CD8-positive, alpha-beta memory T cell (primary cell): ENCODE measurements at regions of chr1 and their contacts with region 1.

Region 1: DNA sequence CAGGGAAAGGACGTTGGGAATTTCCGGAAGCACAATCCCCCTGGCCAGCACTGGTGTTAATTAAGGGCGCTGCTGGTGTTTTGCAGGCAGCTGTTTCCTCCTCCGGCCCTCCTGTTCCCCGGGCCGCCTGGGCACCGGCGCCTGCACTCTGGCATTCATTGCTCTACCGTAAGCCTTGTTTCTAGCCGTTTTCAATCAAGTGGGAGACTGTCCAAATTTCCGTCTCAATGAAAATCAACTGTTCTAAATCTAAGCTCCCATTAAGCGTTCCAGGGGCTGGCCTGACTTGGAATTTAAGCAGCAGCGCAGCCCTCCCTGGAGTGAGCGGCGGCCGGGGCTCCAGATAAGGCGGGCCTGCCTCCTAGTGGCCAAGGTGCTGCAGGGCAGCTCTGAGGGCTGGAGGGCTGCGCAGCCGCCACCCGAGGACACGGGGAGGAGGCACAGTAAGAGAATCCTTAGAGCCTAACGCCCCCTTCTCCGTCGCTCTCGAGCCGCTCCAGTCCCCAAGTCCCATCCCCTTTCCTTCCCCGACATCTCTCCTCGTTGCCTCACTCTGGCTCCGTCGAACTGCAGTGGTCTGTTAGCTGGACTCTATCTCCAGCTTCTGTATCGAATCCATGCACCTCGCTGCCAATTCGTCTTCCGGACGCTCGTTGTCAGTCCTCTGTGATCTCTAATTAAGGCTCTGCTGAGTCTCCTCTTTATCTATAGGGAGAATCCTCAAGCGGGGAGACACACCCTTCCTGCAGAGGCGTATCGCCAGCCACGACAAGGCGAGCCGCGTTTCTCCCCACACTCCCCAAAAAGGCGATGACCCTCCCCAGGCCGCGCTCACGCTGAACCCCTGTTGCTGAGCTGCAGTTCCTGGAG is 57.8 kb upstream of the LRRC8D start:
- DNase-seq: peak; percentile 75 to 90 (median 82)
- H3K4me3 ChIP-seq: peak overlapping the region; percentile 80
- H3K4me3 Mint-ChIP-seq: peak overlapping the region; percentile 85 to 97 (median 88)
- H3K27ac ChIP-seq: peak overlapping the region; percentile 48
- H3K27ac Mint-ChIP-seq: peak overlapping the region; percentile 62 to 96 (median 92)
- H3K4me1 ChIP-seq: peaks cover 43% of the 10 kb centered on the region
- H3K4me1 Mint-ChIP-seq: peaks cover 46 to 55% (median 53%) of the 10 kb centered on the region in 3 donors
- H3K27me3 ChIP-seq: no peaks in the 10 kb centered on the region
- H3K27me3 Mint-ChIP-seq: no peaks in the 10 kb centered on the region

Region 2: DNA sequence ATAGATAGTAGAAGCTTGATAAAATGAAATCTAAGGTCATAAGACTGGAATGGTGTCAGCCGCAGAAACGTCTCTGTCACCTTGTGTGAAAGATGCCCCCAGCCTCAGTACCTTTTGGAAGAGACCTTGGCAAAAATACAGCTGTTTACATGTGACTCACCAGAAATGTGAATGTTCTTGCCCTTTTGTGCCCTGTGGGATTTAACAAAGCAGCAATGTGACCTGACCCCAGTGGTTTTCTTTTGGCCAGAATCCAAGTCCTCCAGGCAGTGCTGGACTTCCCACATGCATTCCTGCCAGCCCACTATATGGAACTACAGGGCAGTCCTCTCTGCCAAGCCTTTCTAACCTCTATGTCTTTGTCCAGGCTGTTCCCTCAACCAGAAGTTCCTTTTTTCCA is 157.3 kb before region 1 on chr1:
- CTCF ChIA-PET with region 1: interaction called, 56 read pairs
- POLR2A ChIA-PET with region 1: interaction called, 12 read pairs
- DNase-seq: no peak
- H3K4me3 ChIP-seq: no peak overlapping the region
- H3K4me3 Mint-ChIP-seq: peak overlapping the region in 5 of 7 donors; percentile 10 to 90 (median 32)
- H3K27ac ChIP-seq: no peak overlapping the region
- H3K27ac Mint-ChIP-seq: peak overlapping the region; percentile 77 to 99 (median 97)
- H3K4me1 ChIP-seq: peaks cover 90% of the 10 kb centered on the region
- H3K4me1 Mint-ChIP-seq: peaks cover 82 to 98% (median 94%) of the 10 kb centered on the region in 3 donors
- H3K27me3 ChIP-seq: no peaks in the 10 kb centered on the region
- H3K27me3 Mint-ChIP-seq: peaks cover 0 to 3% of the 10 kb centered on the region in 2 donors

Region 3: DNA sequence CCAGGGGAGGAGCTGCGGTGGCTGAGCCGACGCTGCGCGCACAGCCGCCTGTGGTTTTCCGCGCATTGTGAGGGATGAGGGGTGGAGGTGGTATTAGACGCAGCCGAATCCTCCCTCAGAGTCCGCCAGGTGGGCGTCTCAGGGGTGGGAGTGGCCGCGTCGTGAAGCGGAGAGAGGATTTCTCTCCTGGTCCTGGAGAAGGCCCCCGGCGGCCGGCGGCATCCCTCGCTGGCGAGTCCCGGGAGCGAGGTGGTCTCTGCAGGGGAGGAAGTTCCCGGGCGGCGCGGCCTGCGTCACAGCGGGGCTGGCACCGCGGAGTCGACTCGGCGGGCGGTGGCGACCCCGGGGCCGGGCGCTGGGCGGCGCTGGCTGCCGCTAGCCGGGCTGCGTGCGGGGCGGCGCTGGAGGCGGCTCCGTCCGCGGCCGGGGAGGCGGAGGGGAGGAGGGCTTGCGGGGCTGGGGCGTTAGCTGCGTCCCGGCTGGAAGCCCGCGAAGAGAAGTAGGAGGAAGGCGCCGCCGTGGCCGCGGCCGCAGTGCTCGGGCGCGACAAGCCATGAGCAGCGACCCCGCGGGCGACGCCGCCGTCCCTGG is 130.3 kb before region 1 on chr1 and contains the start of gene LRRC8C:
- CTCF ChIA-PET with region 1: interaction called, 134 read pairs
- POLR2A ChIA-PET with region 1: interaction called, 32 read pairs
- DNase-seq: peak; percentile 78 to 95 (median 90)
- H3K4me3 ChIP-seq: peak within 1 kb of the TSS; percentile 74
- H3K4me3 Mint-ChIP-seq: peak within 1 kb of the TSS; percentile 90 to 99 (median 96)
- H3K27ac ChIP-seq: peak within 1 kb of the TSS; percentile 86
- H3K27ac Mint-ChIP-seq: peak within 1 kb of the TSS; percentile 95 to 99 (median 98)
- H3K4me1 ChIP-seq: peaks cover 77% of the 10 kb centered on the region
- H3K4me1 Mint-ChIP-seq: peaks cover 72 to 85% (median 83%) of the 10 kb centered on the region in 3 donors
- H3K27me3 ChIP-seq: no peaks in the 10 kb centered on the region
- H3K27me3 Mint-ChIP-seq: peaks cover 0 to 3% of the 10 kb centered on the region in 2 donors
- total RNA-seq, gene LRRC8C: 61.4 to 63.5 TPM

Region 4: DNA sequence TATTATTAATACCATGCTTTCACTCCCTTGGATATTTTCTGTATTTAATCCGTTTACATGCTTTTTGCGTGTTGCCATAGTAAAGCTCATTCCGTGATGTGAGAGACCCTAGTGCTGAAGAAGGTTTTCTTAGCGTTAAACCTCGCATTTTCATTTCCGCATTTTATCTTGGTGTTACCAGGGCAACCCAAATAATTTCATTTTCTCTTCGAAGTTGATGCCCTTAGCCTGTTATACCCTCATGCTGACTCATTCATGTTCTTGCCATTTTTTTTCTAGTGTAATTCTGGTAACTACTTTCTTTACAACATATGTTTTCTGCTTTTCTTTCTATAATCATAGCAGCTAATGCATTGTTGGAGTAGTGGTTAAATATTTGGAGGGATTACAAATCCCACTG is 92.9 kb before region 1 on chr1:
- CTCF ChIA-PET with region 1: interaction called, 17 read pairs
- POLR2A ChIA-PET with region 1: no interaction called
- DNase-seq: peak in 4 of 5 donors; percentile 1 to 70 (median 42)
- H3K4me3 ChIP-seq: no peak overlapping the region
- H3K4me3 Mint-ChIP-seq: peak overlapping the region; percentile 13 to 66 (median 52)
- H3K27ac ChIP-seq: peak overlapping the region; percentile 39
- H3K27ac Mint-ChIP-seq: peak overlapping the region; percentile 27 to 88 (median 69)
- H3K4me1 ChIP-seq: peaks cover 81% of the 10 kb centered on the region
- H3K4me1 Mint-ChIP-seq: peaks cover 85 to 100% (median 99%) of the 10 kb centered on the region in 3 donors
- H3K27me3 ChIP-seq: no peaks in the 10 kb centered on the region
- H3K27me3 Mint-ChIP-seq: no peaks in the 10 kb centered on the region

Region 5: GRCh38 chr1:89780721-89781120 is 17.7 kb after region 1 on chr1:
- CTCF ChIA-PET with region 1: interaction called, 12 read pairs
- POLR2A ChIA-PET with region 1: no interaction called
- DNase-seq: peak in 1 of 5 donors; percentile 37
- H3K4me3 ChIP-seq: no peak overlapping the region
- H3K4me3 Mint-ChIP-seq: peak overlapping the region in 2 of 7 donors; percentile 4 to 32
- H3K27ac ChIP-seq: no peak overlapping the region
- H3K27ac Mint-ChIP-seq: peak overlapping the region in 2 of 8 donors; percentile 61 to 74
- H3K4me1 ChIP-seq: peaks cover 13% of the 10 kb centered on the region
- H3K4me1 Mint-ChIP-seq: peaks cover 25 to 27% (median 27%) of the 10 kb centered on the region in 3 donors
- H3K27me3 ChIP-seq: no peaks in the 10 kb centered on the region
- H3K27me3 Mint-ChIP-seq: no peaks in the 10 kb centered on the region